ENCODE measurements at regions of chr1 and their contacts with region 1.

Region 1: DNA sequence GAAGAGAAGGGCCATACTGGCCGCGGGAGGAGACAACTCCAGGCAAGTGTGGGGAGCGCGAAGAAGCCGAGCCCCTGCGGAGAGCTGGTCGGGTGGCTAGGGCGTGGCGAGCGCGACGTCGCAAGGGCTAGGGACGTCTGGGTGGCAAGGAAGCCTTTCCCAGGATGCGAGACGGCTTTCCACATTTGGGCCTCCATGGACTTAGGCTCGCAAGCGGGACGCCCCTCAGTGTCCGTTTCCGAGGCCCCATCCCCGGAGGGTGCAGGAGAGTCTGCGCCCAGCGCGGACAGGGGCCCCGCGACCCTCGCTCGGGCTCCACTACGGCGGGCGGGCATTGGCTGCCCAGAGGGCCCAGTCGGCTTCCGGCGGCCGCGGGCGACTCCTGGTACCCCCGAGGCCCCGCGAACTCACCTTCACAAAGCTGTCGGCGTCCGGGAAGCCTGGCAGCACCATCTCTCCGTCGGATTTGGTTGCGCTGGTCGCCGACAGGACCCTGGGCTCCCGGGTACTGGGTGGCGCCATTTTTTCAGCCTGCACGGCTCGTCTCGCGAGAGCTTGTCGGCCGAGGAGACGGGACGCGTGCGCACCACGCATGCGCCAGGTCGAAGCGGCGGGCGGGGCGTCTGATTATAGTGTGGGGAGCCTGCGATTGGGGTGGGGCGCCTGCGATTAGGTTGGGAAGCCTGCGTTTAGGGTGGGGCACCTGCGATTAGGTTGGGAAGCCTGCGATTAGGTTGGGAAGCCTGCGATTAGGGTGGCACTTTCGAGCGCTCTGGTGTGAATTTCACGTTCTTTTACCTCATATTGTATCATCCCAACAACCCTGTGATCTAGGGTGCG is at the start of gene EXOSC10:
- DNase-seq: peak; percentile 91
- H3K4me3 Mint-ChIP-seq: peak within 1 kb of the TSS; percentile 98
- H3K27ac Mint-ChIP-seq: peak within 1 kb of the TSS; percentile 94
- H3K4me1 Mint-ChIP-seq: peaks cover 7% of the 10 kb centered on the region
- H3K27me3 Mint-ChIP-seq: no peaks in the 10 kb centered on the region
- CTCF ChIP-seq: no peak
- total RNA-seq, gene EXOSC10: 65.1 and 70.5 TPM in 2 replicates

Region 2: DNA sequence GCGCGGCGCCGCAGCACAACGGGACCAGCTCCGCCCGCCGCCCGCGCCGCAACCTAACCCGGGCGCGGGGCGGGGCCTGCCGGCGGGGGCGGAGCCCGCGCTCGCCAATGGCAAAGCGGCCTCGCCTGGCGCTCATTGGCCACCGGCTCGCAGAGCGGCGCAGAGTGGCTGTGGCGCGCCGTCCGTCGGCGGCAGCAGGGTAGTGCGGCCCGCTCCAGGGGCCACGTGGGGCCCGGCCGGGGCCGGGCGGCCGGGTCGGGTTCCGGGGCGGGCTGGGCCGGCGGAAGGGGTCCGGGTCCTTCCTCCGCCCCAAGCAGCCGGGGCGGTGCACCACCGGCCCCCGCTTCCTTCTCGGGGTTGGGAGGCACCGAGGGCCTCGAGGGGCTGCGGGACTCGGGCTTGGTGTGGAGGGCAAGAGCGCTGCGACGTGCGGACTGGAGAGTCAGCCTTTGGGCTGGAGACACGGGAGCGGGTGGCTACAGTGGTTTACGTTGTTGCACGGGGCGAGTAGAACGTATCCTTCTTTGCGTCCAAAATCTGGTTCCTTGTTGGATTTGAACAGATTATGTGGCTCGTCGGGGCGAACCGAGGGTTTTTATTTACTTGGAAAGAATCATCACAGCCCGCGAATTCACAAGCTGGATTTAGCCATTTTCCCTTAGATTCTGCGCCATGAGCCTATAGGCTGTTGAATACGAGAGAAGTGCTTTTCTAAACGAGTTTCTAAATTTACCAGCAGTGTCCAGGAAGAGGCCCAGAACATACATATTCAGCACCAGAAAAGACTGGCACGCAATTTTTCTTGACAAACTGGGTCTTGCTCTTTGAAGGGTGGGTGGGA is 39.3 kb before region 1 on chr1 and contains the start of gene SRM:
- CTCF ChIA-PET with region 1: interaction called, 3 read pairs
- POLR2A ChIA-PET with region 1: interaction called, 30 read pairs
- intact Hi-C with region 1: no loop called
- DNase-seq: peak; percentile 88
- H3K4me3 Mint-ChIP-seq: peak within 1 kb of the TSS; percentile 97
- H3K27ac Mint-ChIP-seq: peak within 1 kb of the TSS; percentile 92
- H3K4me1 Mint-ChIP-seq: peaks cover 7% of the 10 kb centered on the region
- H3K27me3 Mint-ChIP-seq: no peaks in the 10 kb centered on the region
- CTCF ChIP-seq: peak; percentile 43
- total RNA-seq, gene SRM: 284 and 327 TPM in 2 replicates

Region 3: GRCh38 chr1:11078631-11079030 is 20.9 kb before region 1 on chr1:
- CTCF ChIA-PET with region 1: interaction called, 4 read pairs
- POLR2A ChIA-PET with region 1: interaction called, 19 read pairs
- intact Hi-C with region 1: no loop called
- DNase-seq: no peak
- H3K4me3 Mint-ChIP-seq: no peak overlapping the region
- H3K27ac Mint-ChIP-seq: no peak overlapping the region
- H3K4me1 Mint-ChIP-seq: no peaks in the 10 kb centered on the region
- H3K27me3 Mint-ChIP-seq: no peaks in the 10 kb centered on the region
- CTCF ChIP-seq: no peak

Region 4: GRCh38 chr1:11158720-11159321 is 59.3 kb after region 1 on chr1:
- CTCF ChIA-PET with region 1: no interaction called
- POLR2A ChIA-PET with region 1: interaction called, 9 read pairs
- intact Hi-C with region 1: loop called (anchors 2 kb)
- DNase-seq: peak; percentile 85
- H3K4me3 Mint-ChIP-seq: no peak overlapping the region
- H3K27ac Mint-ChIP-seq: peak overlapping the region; percentile 62
- H3K4me1 Mint-ChIP-seq: peaks cover 22% of the 10 kb centered on the region
- H3K27me3 Mint-ChIP-seq: no peaks in the 10 kb centered on the region
- CTCF ChIP-seq: no peak

Measured in MCF 10A (cell line).